ENCODE measurements at regions of chr4 and their contacts with region 1.

Region 1: GRCh38 chr4:152454398-152455011 is 81.4 kb downstream of the FBXW7 start:
- DNase-seq: peak; percentile 21
- ATAC-seq: no peak
- H3K4me3 ChIP-seq: no peak overlapping the region
- H3K27ac ChIP-seq: no peak overlapping the region
- H3K4me1 ChIP-seq: peaks cover 16% of the 10 kb centered on the region
- H3K27me3 ChIP-seq: no peaks in the 10 kb centered on the region
- CTCF ChIP-seq: peak; percentile 58
- EP300 ChIP-seq: no peak
- POLR2A ChIP-seq: no peak
- RAD21 ChIP-seq: peak; percentile 63

Region 2: DNA sequence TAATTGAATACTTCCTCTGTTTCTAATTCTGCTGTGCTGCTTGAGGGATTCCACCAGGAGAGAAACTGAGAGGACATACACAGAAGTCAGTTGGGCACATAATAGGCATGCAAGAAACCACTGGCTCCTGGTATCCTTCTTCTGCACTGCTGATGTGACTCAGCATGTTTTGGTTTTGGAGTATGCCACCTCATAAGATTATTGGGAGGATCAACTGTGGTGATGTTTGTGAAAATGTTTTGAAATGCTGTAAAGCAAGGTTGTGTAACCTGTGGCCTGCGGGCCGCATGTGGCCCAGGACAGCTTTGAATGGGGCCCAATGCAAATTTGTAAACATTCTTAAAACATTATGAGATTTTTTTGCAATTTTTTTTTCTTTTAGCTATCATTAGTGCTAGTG is 813.3 kb before region 1 on chr4:
- CTCF ChIA-PET with region 1: no interaction called
- POLR2A ChIA-PET with region 1: no interaction called
- in situ Hi-C with region 1: no loop called
- intact Hi-C with region 1: no loop called
- DNase-seq: peak; percentile 3
- ATAC-seq: no peak
- H3K4me3 ChIP-seq: no peak overlapping the region
- H3K27ac ChIP-seq: no peak overlapping the region
- H3K4me1 ChIP-seq: no peaks in the 10 kb centered on the region
- H3K27me3 ChIP-seq: no peaks in the 10 kb centered on the region; a peak in 1 of 5 replicates
- CTCF ChIP-seq: no peak
- EP300 ChIP-seq: no peak
- POLR2A ChIP-seq: no peak
- RAD21 ChIP-seq: no peak

Region 3: GRCh38 chr4:152485726-152486276 is 31.3 kb after region 1 on chr4:
- CTCF ChIA-PET with region 1: no interaction called
- POLR2A ChIA-PET with region 1: interaction called, 3 read pairs
- in situ Hi-C with region 1: no loop called
- intact Hi-C with region 1: loop called (anchors 5 kb)
- DNase-seq: peak; percentile 97
- ATAC-seq: peak; percentile 99
- H3K4me3 ChIP-seq: peak overlapping the region; percentile 35 to 68 (median 65); a peak in 4 of 6 replicates
- H3K27ac ChIP-seq: peak overlapping the region; percentile 92
- H3K4me1 ChIP-seq: peaks cover 74% of the 10 kb centered on the region
- H3K27me3 ChIP-seq: no peaks in the 10 kb centered on the region
- CTCF ChIP-seq: no peak
- EP300 ChIP-seq: peak in 1 of 2 experiments; percentile 82; a peak in 2 of 4 replicates
- POLR2A ChIP-seq: peak in 1 of 2 experiments; percentile 46; a peak in 1 of 4 replicates
- RAD21 ChIP-seq: no peak

Region 4: DNA sequence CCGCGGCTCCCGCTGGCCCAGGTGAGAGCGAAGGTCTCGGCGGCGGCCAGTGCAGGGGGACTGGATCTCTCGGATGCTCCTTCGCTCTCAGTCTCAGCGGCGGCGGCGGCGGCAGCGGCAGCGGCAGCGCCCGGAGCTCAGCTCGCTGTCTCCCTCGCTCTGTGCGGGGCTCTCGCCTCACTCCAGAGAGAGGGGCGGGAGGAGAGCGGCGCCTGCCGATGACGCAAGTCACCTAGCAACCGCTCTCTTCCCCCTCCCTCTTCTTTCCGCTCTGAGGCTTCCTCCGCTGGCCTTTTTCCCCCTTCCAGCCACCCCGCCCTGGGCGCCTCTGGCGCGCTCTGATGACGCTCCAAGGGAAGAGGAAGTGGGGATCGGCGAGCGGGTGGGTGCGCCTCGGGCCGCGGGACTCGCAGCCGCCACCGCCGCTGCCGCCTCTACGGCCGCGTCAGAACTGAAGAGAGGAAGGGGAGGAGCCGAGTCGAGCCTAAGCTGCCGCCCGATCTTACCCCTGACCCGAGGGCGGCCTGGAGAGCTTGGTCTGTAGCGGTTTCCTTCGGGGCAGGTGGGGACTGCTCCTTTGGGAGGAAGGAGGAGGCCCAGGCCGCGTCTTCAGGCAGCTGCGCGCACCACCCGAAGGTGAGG is 81.5 kb after region 1 on chr4 and contains the start of gene FBXW7:
- CTCF ChIA-PET with region 1: no interaction called
- POLR2A ChIA-PET with region 1: no interaction called
- in situ Hi-C with region 1: no loop called
- intact Hi-C with region 1: loop called (anchors 2 kb)
- DNase-seq: peak; percentile 98
- ATAC-seq: peak; percentile 93
- H3K4me3 ChIP-seq: peak within 1 kb of the TSS; percentile 82 to 96 (median 91)
- H3K27ac ChIP-seq: peak within 1 kb of the TSS; percentile 97
- H3K4me1 ChIP-seq: peaks cover 46% of the 10 kb centered on the region
- H3K27me3 ChIP-seq: no peaks in the 10 kb centered on the region; a peak in 2 of 5 replicates
- CTCF ChIP-seq: no peak; the same call in none of the 2 replicates
- EP300 ChIP-seq: peak in 1 of 2 experiments; percentile 12; a peak in 2 of 4 replicates
- POLR2A ChIP-seq: peak; percentile 75 to 76
- RAD21 ChIP-seq: peak; percentile 41; the same call in 1 of the 2 replicates
- total RNA-seq, gene FBXW7: 21.7 and 40.9 TPM in 2 replicates

Region 5: GRCh38 chr4:152640058-152640833 is 185.7 kb after region 1 on chr4:
- CTCF ChIA-PET with region 1: interaction called, 29 read pairs
- POLR2A ChIA-PET with region 1: no interaction called
- in situ Hi-C with region 1: loop called (anchors 5 kb)
- intact Hi-C with region 1: loop called (anchors 1 kb)
- DNase-seq: no peak
- ATAC-seq: peak; percentile 67
- H3K4me3 ChIP-seq: no peak overlapping the region
- H3K27ac ChIP-seq: no peak overlapping the region
- H3K4me1 ChIP-seq: peaks cover 40% of the 10 kb centered on the region
- H3K27me3 ChIP-seq: no peaks in the 10 kb centered on the region
- CTCF ChIP-seq: peak; percentile 54
- EP300 ChIP-seq: no peak; a peak in 1 of 4 replicates
- POLR2A ChIP-seq: no peak
- RAD21 ChIP-seq: peak; percentile 44; the same call in 1 of the 2 replicates

Region 6: GRCh38 chr4:152729466-152729865 is 275.0 kb after region 1 on chr4:
- CTCF ChIA-PET with region 1: no interaction called
- POLR2A ChIA-PET with region 1: no interaction called
- in situ Hi-C with region 1: loop called (anchors 10 kb)
- intact Hi-C with region 1: no loop called
- DNase-seq: no peak
- ATAC-seq: no peak
- H3K4me3 ChIP-seq: no peak overlapping the region
- H3K27ac ChIP-seq: no peak overlapping the region
- H3K4me1 ChIP-seq: no peaks in the 10 kb centered on the region
- H3K27me3 ChIP-seq: no peaks in the 10 kb centered on the region
- CTCF ChIP-seq: no peak
- EP300 ChIP-seq: no peak
- POLR2A ChIP-seq: no peak
- RAD21 ChIP-seq: no peak

Region 7: GRCh38 chr4:152735396-152735859 is 280.9 kb after region 1 on chr4:
- CTCF ChIA-PET with region 1: interaction called, 5 read pairs
- POLR2A ChIA-PET with region 1: no interaction called
- in situ Hi-C with region 1: no loop called
- intact Hi-C with region 1: loop called (anchors 1 kb)
- DNase-seq: no peak
- ATAC-seq: peak; percentile 42; the same call in 2 of the 3 replicates
- H3K4me3 ChIP-seq: no peak overlapping the region
- H3K27ac ChIP-seq: no peak overlapping the region
- H3K4me1 ChIP-seq: no peaks in the 10 kb centered on the region
- H3K27me3 ChIP-seq: peaks cover 0 to 9% of the 10 kb centered on the region in 2 experiments; a peak in 1 of 5 replicates
- CTCF ChIP-seq: peak; percentile 57
- EP300 ChIP-seq: no peak
- POLR2A ChIP-seq: no peak
- RAD21 ChIP-seq: peak; percentile 53; the same call in 1 of the 2 replicates